Activated naive CD4-positive, alpha-beta T cell treated with anti-CD3 and anti-CD28 coated beads for 36 hours (primary cell): ENCODE measurements at regions of chr14 and their contacts with region 1.

Region 1: DNA sequence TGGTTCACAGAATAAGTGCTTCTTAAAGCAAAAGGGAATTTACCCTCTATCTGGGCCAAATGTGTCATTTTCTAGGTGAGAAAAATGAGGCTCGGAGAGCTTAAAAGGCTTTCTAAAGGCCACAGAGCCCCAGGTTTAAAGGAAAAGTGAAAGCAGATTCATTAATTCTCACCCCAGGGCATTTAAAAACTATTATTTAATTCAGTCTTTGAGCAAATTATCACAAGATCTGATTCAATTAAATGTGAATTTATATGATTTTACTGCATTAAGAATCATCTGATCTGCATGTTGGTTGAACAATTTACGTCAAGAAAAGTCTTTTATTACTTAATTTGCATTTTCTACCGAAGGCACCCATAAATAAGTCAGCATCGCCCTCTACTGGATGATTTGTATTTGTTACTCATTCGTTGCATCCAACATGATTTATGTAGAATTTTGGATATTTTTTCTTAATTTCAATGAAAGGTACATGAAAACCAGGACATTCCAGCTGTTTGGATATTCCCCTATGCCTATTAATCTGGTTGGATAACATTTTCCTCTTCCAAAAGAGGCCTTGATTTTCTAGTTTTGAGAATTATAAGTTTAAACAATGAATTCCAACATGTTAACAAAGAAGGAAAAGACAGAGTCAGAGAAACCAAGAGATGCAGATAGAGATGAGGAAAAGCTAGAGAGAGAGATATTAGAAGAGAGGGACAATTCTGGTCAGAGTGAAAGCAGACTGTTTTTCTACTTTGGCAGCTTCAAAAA is 19.1 kb upstream of the DHRS7 start:
- DNase-seq: peak; percentile 22
- H3K4me3 Mint-ChIP-seq: peak overlapping the region; percentile 62
- H3K27ac Mint-ChIP-seq: peak overlapping the region; percentile 89
- H3K4me1 Mint-ChIP-seq: peaks cover 19% of the 10 kb centered on the region
- H3K27me3 Mint-ChIP-seq: no peaks in the 10 kb centered on the region

Region 2: GRCh38 chr14:59189786-59190771 is 994.2 kb before region 1 on chr14:
- CTCF ChIA-PET with region 1: no interaction called
- intact Hi-C with region 1: loop called (anchors 5 kb)
- DNase-seq: peak; percentile 77
- H3K4me3 Mint-ChIP-seq: peak overlapping the region; percentile 91
- H3K27ac Mint-ChIP-seq: no peak overlapping the region
- H3K4me1 Mint-ChIP-seq: peaks cover 13% of the 10 kb centered on the region
- H3K27me3 Mint-ChIP-seq: no peaks in the 10 kb centered on the region

Region 3: GRCh38 chr14:59576332-59577294 is 607.7 kb before region 1 on chr14 and contains the start of gene CCDC175:
- CTCF ChIA-PET with region 1: interaction called, 4 read pairs
- intact Hi-C with region 1: loop called (anchors 2 kb)
- DNase-seq: peak; percentile 89
- H3K4me3 Mint-ChIP-seq: peak within 1 kb of the TSS; percentile 65
- H3K27ac Mint-ChIP-seq: no peak within 1 kb of the TSS
- H3K4me1 Mint-ChIP-seq: peaks cover 5% of the 10 kb centered on the region
- H3K27me3 Mint-ChIP-seq: peaks cover 3% of the 10 kb centered on the region
- total RNA-seq, gene CCDC175: not detected

Region 4: DNA sequence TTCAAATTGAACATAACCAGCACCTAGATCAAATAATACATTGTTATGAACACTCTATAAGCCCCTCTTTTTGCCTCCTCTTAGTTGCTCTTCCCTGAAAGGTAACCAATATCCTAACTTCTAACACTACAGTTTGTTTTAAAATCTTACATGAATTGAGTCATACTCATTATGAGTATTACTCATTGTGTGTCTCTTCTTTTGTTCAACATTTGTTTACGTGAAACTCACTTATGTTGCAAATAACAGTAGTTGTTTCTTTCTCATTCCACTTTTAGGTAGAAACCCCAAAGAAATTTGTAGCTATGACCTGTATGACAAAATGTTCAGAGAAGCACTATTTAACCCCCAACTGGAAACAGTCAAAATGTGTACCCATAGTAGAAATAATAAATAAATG is 257.8 kb before region 1 on chr14:
- CTCF ChIA-PET with region 1: no interaction called
- intact Hi-C with region 1: loop called (anchors 1 kb)
- DNase-seq: no peak
- H3K4me3 Mint-ChIP-seq: no peak overlapping the region
- H3K27ac Mint-ChIP-seq: no peak overlapping the region
- H3K4me1 Mint-ChIP-seq: peaks cover 14% of the 10 kb centered on the region
- H3K27me3 Mint-ChIP-seq: peaks cover 20% of the 10 kb centered on the region

Region 5: DNA sequence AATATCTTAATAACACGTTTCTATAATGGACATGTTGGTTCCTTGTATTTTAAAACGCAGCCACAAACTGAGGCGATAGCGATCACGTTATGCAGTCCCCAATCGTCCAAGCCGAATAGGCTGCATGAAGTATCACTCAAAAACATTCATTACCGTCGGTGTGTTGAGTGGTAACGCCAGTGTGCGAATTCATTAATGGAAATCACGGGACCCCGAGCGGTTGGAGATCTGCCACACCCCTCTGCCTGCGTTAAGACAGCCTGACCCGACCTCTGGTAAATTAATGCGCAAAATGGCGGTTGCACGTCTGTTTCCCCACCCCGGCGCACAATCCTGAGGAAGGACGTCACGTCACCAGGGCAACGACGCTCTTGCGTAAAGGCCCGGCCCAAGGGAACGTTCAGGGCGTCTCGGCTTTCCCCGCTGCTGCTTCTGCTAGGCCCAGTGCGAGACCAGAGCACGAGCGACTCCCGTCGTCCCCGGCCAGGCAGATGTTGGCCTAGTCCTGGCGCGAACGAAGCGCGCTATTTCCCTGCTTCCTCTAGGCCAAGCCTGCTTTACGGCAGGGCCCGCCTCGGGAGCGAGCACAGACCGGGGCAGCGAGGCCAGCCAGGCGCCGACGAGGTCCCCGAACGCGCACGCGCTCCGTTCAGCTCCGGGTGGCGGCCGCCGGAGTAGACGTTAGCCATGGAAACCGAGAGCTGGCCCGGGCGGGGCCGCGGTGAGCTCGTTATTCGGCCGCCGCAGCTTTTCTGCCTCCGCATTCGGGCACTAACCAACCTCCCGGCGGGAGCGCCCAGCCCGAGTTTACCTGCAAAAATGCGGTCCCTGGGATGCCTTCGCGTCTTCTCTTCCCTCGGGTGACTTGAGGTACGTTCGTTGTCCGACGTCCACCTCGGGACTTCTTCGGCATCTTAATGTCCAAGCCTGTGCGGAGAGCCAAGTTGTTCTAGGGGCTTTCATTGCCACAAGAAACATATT is 92.5 kb before region 1 on chr14 and contains the start of gene PCNX4:
- CTCF ChIA-PET with region 1: interaction called, 3 read pairs
- intact Hi-C with region 1: loop called (anchors 1 kb)
- DNase-seq: peak; percentile 95
- H3K4me3 Mint-ChIP-seq: peak within 1 kb of the TSS; percentile 98
- H3K27ac Mint-ChIP-seq: peak within 1 kb of the TSS; percentile 95
- H3K4me1 Mint-ChIP-seq: peaks cover 34% of the 10 kb centered on the region
- H3K27me3 Mint-ChIP-seq: peaks cover 9% of the 10 kb centered on the region
- total RNA-seq, gene PCNX4: 24.9 to 27.5 TPM

Region 6: DNA sequence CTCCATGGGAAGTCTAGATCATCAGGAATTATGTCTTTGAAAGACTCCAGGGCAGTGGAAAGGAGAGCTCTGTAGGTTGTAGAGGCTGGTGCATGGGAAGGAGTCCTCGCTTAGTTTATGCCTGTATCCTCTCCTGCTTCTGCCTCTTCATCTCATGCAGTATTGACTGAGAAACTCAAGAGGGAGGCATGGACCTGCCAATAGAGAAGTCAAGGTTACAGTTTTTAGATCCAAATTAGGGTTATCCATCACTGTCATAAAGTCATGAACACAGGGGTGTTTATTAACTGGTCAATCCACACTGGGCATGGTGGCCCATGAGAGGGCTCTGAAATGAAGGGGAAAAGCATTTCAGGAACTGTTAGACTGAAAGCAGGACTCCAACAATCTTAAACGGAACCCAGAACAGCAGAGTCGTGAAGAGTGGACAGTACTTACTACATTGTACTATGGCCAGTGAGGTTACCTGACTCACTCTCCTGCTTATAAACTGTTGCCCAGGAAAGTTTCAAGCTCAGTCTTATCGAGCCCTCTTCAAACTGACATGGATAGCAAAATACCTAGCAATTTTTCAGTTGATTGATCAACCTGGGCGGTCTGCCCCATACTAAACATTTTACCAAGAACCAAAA is 11.0 kb after region 1 on chr14:
- CTCF ChIA-PET with region 1: interaction called, 10 read pairs
- intact Hi-C with region 1: no loop called
- DNase-seq: no peak
- H3K4me3 Mint-ChIP-seq: no peak overlapping the region
- H3K27ac Mint-ChIP-seq: no peak overlapping the region
- H3K4me1 Mint-ChIP-seq: peaks cover 11% of the 10 kb centered on the region
- H3K27me3 Mint-ChIP-seq: peaks cover 10% of the 10 kb centered on the region